ENCODE measurements at regions of chr5 and their contacts with region 1.

Region 1: GRCh38 chr5:96868603-96869371 is 7.5 kb upstream of the ERAP2 start:
- DNase-seq: peak; percentile 77
- ATAC-seq: peak; percentile 84
- H3K4me3 ChIP-seq: no peak overlapping the region
- H3K4me3 Mint-ChIP-seq: no peak overlapping the region
- H3K27ac ChIP-seq: no peak overlapping the region
- H3K27ac Mint-ChIP-seq: peak overlapping the region; percentile 4
- H3K4me1 ChIP-seq: peaks cover 31 to 37% of the 10 kb centered on the region in 2 donors
- H3K4me1 Mint-ChIP-seq: peaks cover 46% of the 10 kb centered on the region
- H3K27me3 ChIP-seq: no peaks in the 10 kb centered on the region
- H3K27me3 Mint-ChIP-seq: no peaks in the 10 kb centered on the region
- CTCF ChIP-seq: peak; percentile 93

Region 2: GRCh38 chr5:96816411-96816939 is 52.3 kb before region 1 on chr5:
- CTCF ChIA-PET with region 1: interaction called, 14 read pairs
- POLR2A ChIA-PET with region 1: no interaction called
- intact Hi-C with region 1: no loop called
- DNase-seq: peak; percentile 65
- ATAC-seq: peak; percentile 79
- H3K4me3 ChIP-seq: peak overlapping the region; percentile 8 to 65 (median 48)
- H3K4me3 Mint-ChIP-seq: peak overlapping the region; percentile 88
- H3K27ac ChIP-seq: peak overlapping the region; percentile 67 to 71
- H3K27ac Mint-ChIP-seq: peak overlapping the region; percentile 76
- H3K4me1 ChIP-seq: peaks cover 21 to 23% of the 10 kb centered on the region in 2 donors
- H3K4me1 Mint-ChIP-seq: peaks cover 22% of the 10 kb centered on the region
- H3K27me3 ChIP-seq: no peaks in the 10 kb centered on the region
- H3K27me3 Mint-ChIP-seq: no peaks in the 10 kb centered on the region
- CTCF ChIP-seq: no peak

Region 3: DNA sequence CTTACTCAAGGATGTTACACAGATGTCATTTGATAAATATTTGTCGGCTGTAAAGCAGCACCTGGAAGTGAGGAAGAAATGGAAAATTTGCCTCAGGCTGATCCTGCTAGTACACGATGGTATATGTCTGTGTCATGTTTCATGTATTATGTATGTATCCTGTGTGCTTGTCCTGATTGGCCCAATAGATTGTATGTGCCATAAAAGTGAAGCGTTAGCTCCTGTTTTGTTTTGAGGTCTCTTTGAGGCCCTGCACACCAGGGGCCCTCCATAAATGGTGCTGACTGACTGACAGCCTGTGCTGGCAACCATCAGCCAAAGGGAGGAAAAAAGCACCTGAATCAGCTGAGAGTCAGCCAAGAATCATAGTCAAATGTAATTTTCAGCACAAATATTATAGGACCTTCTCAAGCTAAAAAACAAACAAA is 55.2 kb after region 1 on chr5:
- CTCF ChIA-PET with region 1: interaction called, 12 read pairs
- POLR2A ChIA-PET with region 1: no interaction called
- intact Hi-C with region 1: no loop called
- DNase-seq: no peak
- ATAC-seq: no peak
- H3K4me3 ChIP-seq: no peak overlapping the region
- H3K4me3 Mint-ChIP-seq: peak overlapping the region; percentile 17
- H3K27ac ChIP-seq: peak overlapping the region in 1 of 2 donors; percentile 34
- H3K27ac Mint-ChIP-seq: peak overlapping the region; percentile 21
- H3K4me1 ChIP-seq: peaks cover 21 to 28% of the 10 kb centered on the region in 2 donors
- H3K4me1 Mint-ChIP-seq: peaks cover 58% of the 10 kb centered on the region
- H3K27me3 ChIP-seq: no peaks in the 10 kb centered on the region
- H3K27me3 Mint-ChIP-seq: no peaks in the 10 kb centered on the region
- CTCF ChIP-seq: no peak

Region 4: DNA sequence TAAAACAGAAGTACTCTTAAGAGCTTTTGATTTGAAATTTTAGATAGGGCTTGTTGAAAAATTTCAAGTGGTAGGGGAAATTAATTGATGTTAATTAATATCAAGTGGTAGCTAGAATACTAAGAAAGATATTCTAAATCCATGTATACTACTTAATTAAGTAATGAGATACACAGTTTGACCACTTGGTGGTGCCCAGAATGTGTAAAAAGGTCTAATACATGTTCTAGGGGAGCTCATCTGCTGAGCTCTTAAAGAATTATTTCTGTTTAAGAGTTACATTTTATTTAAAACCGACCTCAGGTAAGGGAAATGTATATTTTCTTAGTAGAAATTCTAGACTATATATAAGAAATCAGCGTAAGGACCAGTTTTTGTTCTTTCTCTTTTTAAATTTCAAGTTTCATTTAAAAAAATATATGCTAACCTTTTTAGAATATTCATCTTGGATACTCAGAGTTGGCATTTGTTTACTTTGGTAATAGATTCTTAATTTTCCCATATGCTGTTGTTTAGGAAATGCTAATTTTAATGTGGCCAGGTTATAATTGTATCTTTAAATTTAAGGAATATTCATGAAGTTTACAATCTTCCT is 128.6 kb after region 1 on chr5:
- CTCF ChIA-PET with region 1: interaction called, 58 read pairs
- POLR2A ChIA-PET with region 1: no interaction called
- intact Hi-C with region 1: loop called (anchors 5 kb)
- DNase-seq: peak; percentile 61
- ATAC-seq: peak; percentile 66
- H3K4me3 ChIP-seq: no peak overlapping the region
- H3K4me3 Mint-ChIP-seq: no peak overlapping the region
- H3K27ac ChIP-seq: no peak overlapping the region
- H3K27ac Mint-ChIP-seq: no peak overlapping the region
- H3K4me1 ChIP-seq: no peaks in the 10 kb centered on the region
- H3K4me1 Mint-ChIP-seq: peaks cover 5% of the 10 kb centered on the region
- H3K27me3 ChIP-seq: no peaks in the 10 kb centered on the region
- H3K27me3 Mint-ChIP-seq: no peaks in the 10 kb centered on the region
- CTCF ChIP-seq: peak; percentile 78

Region 5: DNA sequence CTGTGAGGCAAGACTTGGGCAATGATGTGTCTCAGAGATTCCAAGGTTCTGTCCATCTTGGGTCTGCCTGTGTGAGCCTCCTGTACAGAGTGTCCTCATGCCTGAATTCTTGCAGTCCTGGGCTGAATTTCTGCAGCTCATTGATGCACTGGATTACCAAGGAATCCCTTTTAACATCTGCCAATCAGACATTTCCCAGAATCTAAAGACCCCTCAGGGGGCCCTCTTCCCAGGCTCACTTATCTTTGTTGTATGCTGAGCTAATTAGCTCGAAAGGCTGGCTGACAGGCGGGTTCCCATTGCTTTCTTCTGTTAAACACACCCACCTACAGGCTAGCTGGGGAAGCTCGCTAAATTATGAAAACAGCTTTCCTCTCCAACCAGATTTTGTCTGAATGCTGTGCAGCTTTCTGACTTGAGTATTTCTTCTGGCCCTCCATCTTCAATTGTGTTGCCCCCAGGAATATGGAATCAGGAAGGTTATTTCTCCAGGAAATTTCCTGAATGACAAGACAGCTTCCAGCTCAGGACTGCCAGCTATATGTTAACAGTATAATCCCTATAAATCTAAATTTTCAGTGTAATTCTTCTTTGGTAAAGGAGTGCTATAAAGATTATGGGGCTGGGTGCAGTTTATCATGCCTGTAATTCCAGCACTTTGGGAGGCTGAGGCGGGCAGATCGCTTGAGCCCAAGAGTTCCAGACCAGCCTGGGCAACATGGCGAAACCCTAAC is 273.9 kb after region 1 on chr5 and contains the start of gene LIX1:
- CTCF ChIA-PET with region 1: interaction called, 40 read pairs
- POLR2A ChIA-PET with region 1: no interaction called
- intact Hi-C with region 1: loop called (anchors 1 kb)
- DNase-seq: peak; percentile 34
- ATAC-seq: no peak
- H3K4me3 ChIP-seq: no peak within 1 kb of the TSS
- H3K4me3 Mint-ChIP-seq: no peak within 1 kb of the TSS
- H3K27ac ChIP-seq: no peak within 1 kb of the TSS
- H3K27ac Mint-ChIP-seq: no peak within 1 kb of the TSS
- H3K4me1 ChIP-seq: no peaks in the 10 kb centered on the region
- H3K4me1 Mint-ChIP-seq: no peaks in the 10 kb centered on the region
- H3K27me3 ChIP-seq: no peaks in the 10 kb centered on the region
- H3K27me3 Mint-ChIP-seq: no peaks in the 10 kb centered on the region
- CTCF ChIP-seq: peak; percentile 35
- total RNA-seq, gene LIX1: not detected in 2 replicates